Posterior vena cava (tissue), 2 donors: ENCODE measurements at regions of chr2 and their contacts with region 1.

Region 1: GRCh38 chr2:239288951-239289511 is 111.8 kb downstream of the HDAC4 start:
- DNase-seq: peak; percentile 77

Region 2: GRCh38 chr2:239035361-239036078 is 253.5 kb before region 1 on chr2:
- intact Hi-C with region 1: loop called in 1 of 2 experiments (anchors 10 kb)
- DNase-seq: peak; percentile 88

Region 3: GRCh38 chr2:239137165-239137897 is 151.7 kb before region 1 on chr2:
- intact Hi-C with region 1: loop called in 1 of 2 experiments (anchors 10 kb)
- DNase-seq: no peak

Region 4: DNA sequence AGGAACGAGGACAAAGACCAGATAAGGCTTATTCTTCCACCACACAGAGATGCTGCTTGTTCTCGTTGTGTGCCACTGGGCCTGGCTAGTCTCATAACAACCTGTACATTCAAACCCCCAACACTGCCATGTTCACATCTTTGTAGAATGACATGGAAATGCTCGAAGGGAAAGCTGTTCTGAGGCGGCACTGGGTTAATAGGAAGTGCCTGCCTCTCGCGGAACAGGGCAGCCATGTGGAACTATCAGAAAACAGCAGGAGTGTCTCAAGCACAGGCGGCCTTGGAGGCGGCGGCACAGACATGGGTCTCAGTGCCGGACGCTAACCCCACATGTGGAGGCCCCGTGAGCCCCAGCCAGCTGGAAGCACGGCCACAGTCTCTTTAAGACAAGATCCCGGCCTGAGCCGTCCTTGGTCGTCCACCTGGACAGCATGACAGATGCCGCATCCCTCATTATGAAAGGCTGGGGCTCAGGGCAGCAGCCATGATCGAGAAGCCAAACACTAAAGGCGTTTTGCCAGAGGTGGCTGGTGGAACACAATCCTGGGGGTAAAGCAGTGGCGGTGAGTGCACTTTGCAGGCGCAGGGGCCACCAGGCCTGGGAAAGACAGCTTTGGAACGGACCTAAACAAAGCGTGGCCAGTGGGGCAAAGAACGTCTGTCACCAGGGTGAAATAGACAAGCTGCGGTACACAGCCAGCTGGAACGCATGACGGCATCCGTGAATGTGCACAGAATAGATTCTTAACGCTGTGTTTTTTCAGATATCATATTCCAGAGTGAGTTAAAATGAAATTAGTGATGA is 49.2 kb before region 1 on chr2:
- intact Hi-C with region 1: loop called in 1 of 2 experiments (anchors 5 kb)
- DNase-seq: no peak

Region 5: GRCh38 chr2:239339726-239340601 is 50.9 kb after region 1 on chr2:
- intact Hi-C with region 1: no loop called
- DNase-seq: no peak